ENCODE measurements at regions of chr5 and their contacts with region 1.

Region 1: DNA sequence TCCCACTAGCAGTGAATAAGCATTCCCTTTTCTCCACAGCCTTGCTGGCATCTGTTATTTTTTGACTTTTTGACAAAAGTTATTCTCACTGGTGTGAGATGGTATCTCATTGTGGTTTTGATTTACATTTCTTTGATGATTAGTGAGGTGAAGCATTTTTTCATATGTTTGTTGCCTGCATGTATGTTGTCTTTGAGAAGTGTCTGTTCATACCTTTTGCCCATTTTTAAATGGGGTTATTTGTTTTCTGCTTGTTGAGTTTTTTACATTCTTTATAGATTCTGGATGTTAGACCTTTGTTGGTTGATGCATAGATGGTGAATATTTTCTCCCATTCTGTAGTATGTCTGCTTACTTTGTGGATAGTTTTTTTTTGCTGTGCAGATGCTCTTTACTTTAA is 171.7 kb downstream of the SREK1 start:
- DNase-seq: no peak
- ATAC-seq: no peak
- H3K4me3 ChIP-seq: no peak overlapping the region
- H3K27ac ChIP-seq: no peak overlapping the region
- H3K4me1 ChIP-seq: no peaks in the 10 kb centered on the region
- H3K27me3 ChIP-seq: no peaks in the 10 kb centered on the region; a peak in 1 of 5 replicates
- CTCF ChIP-seq: no peak
- EP300 ChIP-seq: no peak
- POLR2A ChIP-seq: no peak
- RAD21 ChIP-seq: no peak

Region 2: GRCh38 chr5:66193419-66193818 is 122.4 kb before region 1 on chr5:
- CTCF ChIA-PET with region 1: no interaction called
- POLR2A ChIA-PET with region 1: no interaction called
- in situ Hi-C with region 1: no loop called
- intact Hi-C with region 1: no loop called
- DNase-seq: no peak
- ATAC-seq: no peak
- H3K4me3 ChIP-seq: no peak overlapping the region
- H3K27ac ChIP-seq: no peak overlapping the region
- H3K4me1 ChIP-seq: no peaks in the 10 kb centered on the region
- H3K27me3 ChIP-seq: no peaks in the 10 kb centered on the region
- CTCF ChIP-seq: no peak
- EP300 ChIP-seq: no peak
- POLR2A ChIP-seq: no peak
- RAD21 ChIP-seq: no peak

Region 3: DNA sequence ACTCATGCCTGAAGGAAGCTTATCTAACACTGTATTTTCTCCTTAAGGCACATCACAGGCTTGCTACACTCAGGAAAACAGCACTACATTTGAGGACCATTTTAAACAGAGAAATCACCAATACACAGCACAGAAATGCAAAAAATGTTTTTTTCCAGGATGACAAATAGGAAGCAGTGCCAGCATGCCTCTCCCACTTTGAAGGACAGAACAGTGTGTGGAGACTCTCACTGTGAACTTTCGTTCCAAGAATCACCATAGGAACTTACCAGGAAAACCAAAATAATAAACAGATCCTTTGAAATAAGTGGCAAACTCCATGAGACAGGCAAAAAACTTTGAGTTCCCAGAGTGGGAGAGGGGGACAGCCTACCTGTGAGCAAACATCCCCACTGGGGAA is 62.6 kb after region 1 on chr5:
- CTCF ChIA-PET with region 1: no interaction called
- POLR2A ChIA-PET with region 1: no interaction called
- in situ Hi-C with region 1: no loop called
- intact Hi-C with region 1: no loop called
- DNase-seq: no peak
- ATAC-seq: no peak
- H3K4me3 ChIP-seq: no peak overlapping the region
- H3K27ac ChIP-seq: no peak overlapping the region
- H3K4me1 ChIP-seq: no peaks in the 10 kb centered on the region
- H3K27me3 ChIP-seq: 0 out of 5 replicates have a peak, but pooled peaks cover 0 to 3% of the 10 kb centered on the region in 2 experiments
- CTCF ChIP-seq: no peak
- EP300 ChIP-seq: no peak
- POLR2A ChIP-seq: no peak
- RAD21 ChIP-seq: no peak

Region 4: DNA sequence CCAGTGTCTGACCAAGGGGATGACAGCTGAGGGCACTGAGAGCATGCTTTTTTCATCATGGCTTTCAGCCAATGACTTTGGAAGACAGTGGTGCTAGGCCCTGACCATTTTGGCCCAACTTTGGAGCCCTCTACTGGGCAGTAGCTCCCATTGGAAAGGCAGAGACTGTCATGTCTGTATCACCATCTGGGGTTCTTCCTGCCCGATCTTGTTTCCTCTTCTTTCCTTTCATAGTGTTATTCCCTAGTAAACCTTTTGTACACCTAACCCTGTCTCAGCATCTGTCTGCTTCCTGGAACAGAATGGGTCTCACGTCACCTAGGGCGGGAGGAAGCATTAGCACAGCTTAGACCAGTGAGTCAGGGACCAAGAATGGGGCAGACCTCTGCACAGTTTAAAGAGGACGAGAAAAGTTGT is 183.0 kb after region 1 on chr5:
- CTCF ChIA-PET with region 1: no interaction called
- POLR2A ChIA-PET with region 1: no interaction called
- in situ Hi-C with region 1: no loop called
- intact Hi-C with region 1: no loop called
- DNase-seq: peak; percentile 6
- ATAC-seq: peak; percentile 54; the same call in 2 of the 3 replicates
- H3K4me3 ChIP-seq: no peak overlapping the region
- H3K27ac ChIP-seq: no peak overlapping the region
- H3K4me1 ChIP-seq: no peaks in the 10 kb centered on the region
- H3K27me3 ChIP-seq: no peaks in the 10 kb centered on the region; a peak in 2 of 5 replicates
- CTCF ChIP-seq: 0 out of 2 replicates have a peak, but pooled peaks have one; percentile 10
- EP300 ChIP-seq: no peak
- POLR2A ChIP-seq: no peak
- RAD21 ChIP-seq: no peak

Region 5: DNA sequence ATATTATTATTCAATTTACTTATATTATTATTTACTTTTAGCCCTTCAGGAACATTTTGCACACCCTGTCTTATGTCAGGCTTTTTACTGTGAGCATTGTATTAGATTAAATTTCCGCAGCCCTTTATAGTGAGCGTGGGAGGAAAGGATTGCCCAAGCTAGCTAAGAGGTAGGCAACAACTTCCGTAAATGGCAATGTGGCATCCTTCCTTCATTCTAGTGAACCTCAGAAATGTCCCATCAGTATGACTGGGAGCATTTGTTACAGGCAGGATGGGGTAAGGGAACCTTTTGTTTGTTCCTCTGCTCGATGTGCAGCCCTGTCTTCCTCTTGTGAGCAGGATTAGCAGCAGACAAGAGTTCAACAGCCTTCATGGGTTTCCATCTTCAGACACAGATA is 887.0 kb after region 1 on chr5:
- CTCF ChIA-PET with region 1: no interaction called
- POLR2A ChIA-PET with region 1: no interaction called
- in situ Hi-C with region 1: no loop called
- intact Hi-C with region 1: loop called (anchors 5 kb)
- DNase-seq: no peak
- ATAC-seq: no peak
- H3K4me3 ChIP-seq: no peak overlapping the region
- H3K27ac ChIP-seq: no peak overlapping the region
- H3K4me1 ChIP-seq: peaks cover 5% of the 10 kb centered on the region; the same call in 1 of the 2 replicates
- H3K27me3 ChIP-seq: no peaks in the 10 kb centered on the region
- CTCF ChIP-seq: no peak
- EP300 ChIP-seq: no peak
- POLR2A ChIP-seq: no peak
- RAD21 ChIP-seq: no peak

Measured in HepG2 (cell line).